CD4-positive, alpha-beta T cell (primary cell): ENCODE measurements at regions of chr12 and their contacts with region 1.

Region 1: DNA sequence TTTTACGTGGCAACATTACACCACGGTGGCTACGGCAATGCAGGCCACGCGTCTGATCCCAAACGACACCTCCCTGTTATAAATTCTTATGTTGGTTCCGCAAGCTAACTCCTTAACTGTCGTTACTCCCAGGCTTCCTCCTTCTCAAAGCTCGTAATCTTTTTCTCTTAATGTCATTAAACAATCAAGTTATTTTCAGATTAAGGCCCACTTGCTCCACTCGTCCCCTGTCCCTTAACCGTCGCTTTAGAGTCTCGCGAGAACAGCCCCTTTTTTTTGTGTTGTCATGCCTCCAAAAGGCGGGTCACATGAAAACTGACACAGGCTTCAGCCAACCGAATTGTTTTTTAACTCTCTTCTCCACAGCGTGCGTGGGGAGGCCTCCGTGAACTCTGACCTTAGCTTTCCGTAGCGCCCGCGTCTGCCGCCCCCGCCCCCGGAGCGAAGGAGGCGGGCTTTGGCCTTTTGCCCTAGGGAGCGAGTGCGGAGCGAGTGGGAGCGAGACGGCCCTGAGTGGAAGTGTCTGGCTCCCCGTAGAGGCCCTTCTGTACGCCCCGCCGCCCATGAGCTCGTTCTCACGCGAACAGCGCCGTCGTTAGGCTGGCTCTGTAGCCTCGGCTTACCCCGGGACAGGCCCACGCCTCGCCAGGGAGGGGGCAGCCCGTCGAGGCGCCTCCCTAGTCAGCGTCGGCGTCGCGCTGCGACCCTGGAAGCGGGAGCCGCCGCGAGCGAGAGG is at the start of gene CAND1:
- DNase-seq: peak; percentile 90 to 99 (median 94)
- ATAC-seq: peak; percentile 77
- H3K4me3 ChIP-seq: peak within 1 kb of the TSS; percentile 91
- H3K4me3 Mint-ChIP-seq: peak within 1 kb of the TSS; percentile 94
- H3K27ac ChIP-seq: peak within 1 kb of the TSS; percentile 96 to 98
- H3K27ac Mint-ChIP-seq: peak within 1 kb of the TSS; percentile 97
- H3K4me1 ChIP-seq: peaks cover 24% of the 10 kb centered on the region
- H3K4me1 Mint-ChIP-seq: peaks cover 50% of the 10 kb centered on the region
- H3K27me3 ChIP-seq: no peaks in the 10 kb centered on the region
- H3K27me3 Mint-ChIP-seq: no peaks in the 10 kb centered on the region
- CTCF ChIP-seq: no peak
- total RNA-seq, gene CAND1: 118 to 124 TPM

Region 2: DNA sequence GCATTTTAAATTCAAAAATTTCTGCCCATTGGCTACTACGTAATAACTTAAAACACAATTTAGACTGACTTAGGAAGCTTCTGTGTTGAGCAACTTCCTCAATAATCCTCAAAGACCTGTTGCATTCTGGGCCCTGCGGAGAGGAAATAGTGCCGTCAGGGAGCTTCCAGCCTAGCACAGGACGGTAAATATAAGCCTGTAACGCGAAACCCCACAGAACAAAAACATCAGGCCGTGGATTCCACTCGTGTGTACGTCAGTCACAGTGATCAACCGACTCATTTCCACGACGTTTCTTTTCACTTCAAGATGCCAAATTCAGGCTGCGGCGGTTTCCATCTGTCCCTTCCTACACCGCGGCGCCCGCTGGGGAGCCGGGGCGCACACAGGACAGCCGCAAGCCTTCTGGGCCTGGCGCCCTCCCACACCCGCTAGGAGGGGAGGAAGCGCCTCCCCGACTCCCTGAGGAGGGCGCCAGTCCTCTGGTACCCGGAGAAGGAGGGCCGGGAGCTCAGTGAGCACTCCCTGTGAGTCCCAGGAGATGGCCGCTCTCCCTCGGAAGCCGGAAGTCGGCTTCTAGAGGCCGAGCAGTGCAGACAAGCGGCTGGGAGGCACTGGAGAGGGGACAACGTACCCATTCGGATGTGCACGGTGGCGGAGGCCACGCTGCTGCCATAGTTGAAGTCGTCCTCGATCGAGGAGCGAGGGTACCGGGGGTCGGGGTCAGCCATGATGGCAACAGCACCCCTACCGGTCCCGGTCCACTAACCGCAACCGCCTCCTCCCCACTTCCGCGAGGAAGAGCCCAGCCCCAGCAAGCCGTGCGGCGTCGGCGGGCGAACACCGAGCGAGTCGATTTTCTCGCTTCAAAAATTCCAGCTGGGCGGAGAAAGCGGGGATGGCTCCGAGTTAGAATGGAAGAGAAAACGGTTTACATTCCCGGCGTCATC is 1099.6 kb before region 1 on chr12 and contains the start of gene TMBIM4:
- CTCF ChIA-PET with region 1: no interaction called
- POLR2A ChIA-PET with region 1: interaction called, 17 read pairs
- intact Hi-C with region 1: no loop called
- DNase-seq: peak; percentile 64 to 94 (median 77)
- ATAC-seq: peak; percentile 81
- H3K4me3 ChIP-seq: peak within 1 kb of the TSS; percentile 88
- H3K4me3 Mint-ChIP-seq: peak within 1 kb of the TSS; percentile 93
- H3K27ac ChIP-seq: peak within 1 kb of the TSS; percentile 98
- H3K27ac Mint-ChIP-seq: peak within 1 kb of the TSS; percentile 93
- H3K4me1 ChIP-seq: peaks cover 17% of the 10 kb centered on the region
- H3K4me1 Mint-ChIP-seq: peaks cover 57% of the 10 kb centered on the region
- H3K27me3 ChIP-seq: no peaks in the 10 kb centered on the region
- H3K27me3 Mint-ChIP-seq: peaks cover 4% of the 10 kb centered on the region
- CTCF ChIP-seq: peak; percentile 57
- total RNA-seq, gene TMBIM4: 24.1 to 24.2 TPM

Region 3: GRCh38 chr12:66964629-66965028 is 304.4 kb before region 1 on chr12:
- CTCF ChIA-PET with region 1: no interaction called
- POLR2A ChIA-PET with region 1: no interaction called
- intact Hi-C with region 1: loop called in 1 of 2 experiments (anchors 1 kb)
- DNase-seq: peak in 11 of 14 experiments; percentile 1 to 90 (median 27)
- ATAC-seq: peak; percentile 96
- H3K4me3 ChIP-seq: no peak overlapping the region
- H3K4me3 Mint-ChIP-seq: peak overlapping the region; percentile 69
- H3K27ac ChIP-seq: peak overlapping the region in 1 of 2 donors; percentile 60
- H3K27ac Mint-ChIP-seq: peak overlapping the region; percentile 86
- H3K4me1 ChIP-seq: peaks cover 13% of the 10 kb centered on the region
- H3K4me1 Mint-ChIP-seq: peaks cover 44% of the 10 kb centered on the region
- H3K27me3 ChIP-seq: no peaks in the 10 kb centered on the region
- H3K27me3 Mint-ChIP-seq: no peaks in the 10 kb centered on the region
- CTCF ChIP-seq: no peak

Region 4: DNA sequence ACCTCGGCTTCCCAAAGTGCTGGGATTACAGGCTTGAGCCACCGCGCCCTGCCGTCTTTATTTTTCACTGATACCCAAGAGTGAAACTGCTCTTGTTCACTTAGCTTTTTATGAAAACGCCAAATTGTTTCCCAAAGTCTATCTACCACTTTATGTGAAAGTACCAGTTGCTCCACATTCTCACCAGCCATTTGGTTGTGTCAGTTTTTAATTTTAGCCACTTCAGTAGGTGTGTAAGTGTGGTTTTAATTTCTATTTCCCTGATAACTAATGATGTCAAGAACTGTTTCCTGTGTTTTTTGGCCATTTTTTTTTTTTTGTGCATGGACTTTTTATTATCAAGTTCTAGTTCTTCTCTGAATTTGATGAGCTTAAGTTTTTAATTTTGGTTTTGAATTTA is 17.2 kb after region 1 on chr12:
- CTCF ChIA-PET with region 1: interaction called, 4 read pairs
- POLR2A ChIA-PET with region 1: interaction called, 33 read pairs
- intact Hi-C with region 1: no loop called
- DNase-seq: peak in 1 of 14 experiments; percentile 5
- ATAC-seq: no peak
- H3K4me3 ChIP-seq: no peak overlapping the region
- H3K4me3 Mint-ChIP-seq: no peak overlapping the region
- H3K27ac ChIP-seq: no peak overlapping the region
- H3K27ac Mint-ChIP-seq: no peak overlapping the region
- H3K4me1 ChIP-seq: peaks cover 6% of the 10 kb centered on the region
- H3K4me1 Mint-ChIP-seq: peaks cover 84% of the 10 kb centered on the region
- H3K27me3 ChIP-seq: no peaks in the 10 kb centered on the region
- H3K27me3 Mint-ChIP-seq: no peaks in the 10 kb centered on the region
- CTCF ChIP-seq: no peak

Region 5: DNA sequence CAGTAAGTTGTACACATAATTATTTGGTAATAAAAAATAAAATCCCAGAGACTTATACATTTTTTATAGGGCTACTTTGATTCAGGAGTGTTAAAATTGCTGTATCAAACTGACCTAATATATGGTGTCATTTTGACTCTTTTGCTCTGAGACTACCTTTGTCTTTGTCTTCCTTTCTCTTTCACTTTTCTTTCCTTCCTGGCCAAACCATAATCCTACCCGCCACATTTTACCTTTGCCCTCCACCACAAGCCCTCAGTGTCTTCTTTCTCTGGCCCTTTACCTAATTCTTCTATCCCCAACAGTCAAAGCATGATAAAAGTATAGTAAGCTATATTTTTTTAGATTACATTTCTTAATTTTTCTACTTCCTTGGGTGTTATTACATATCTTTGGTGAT is 62.1 kb after region 1 on chr12:
- CTCF ChIA-PET with region 1: no interaction called
- POLR2A ChIA-PET with region 1: no interaction called
- intact Hi-C with region 1: no loop called
- DNase-seq: peak in 1 of 14 experiments; percentile 11
- ATAC-seq: no peak
- H3K4me3 ChIP-seq: no peak overlapping the region
- H3K4me3 Mint-ChIP-seq: no peak overlapping the region
- H3K27ac ChIP-seq: no peak overlapping the region
- H3K27ac Mint-ChIP-seq: no peak overlapping the region
- H3K4me1 ChIP-seq: no peaks in the 10 kb centered on the region
- H3K4me1 Mint-ChIP-seq: peaks cover 5% of the 10 kb centered on the region
- H3K27me3 ChIP-seq: no peaks in the 10 kb centered on the region
- H3K27me3 Mint-ChIP-seq: no peaks in the 10 kb centered on the region
- CTCF ChIP-seq: no peak

Region 6: GRCh38 chr12:67648521-67649260 is 379.6 kb after region 1 on chr12 and contains the start of gene DYRK2:
- CTCF ChIA-PET with region 1: no interaction called
- POLR2A ChIA-PET with region 1: interaction called, 15 read pairs
- intact Hi-C with region 1: loop called (anchors 2 to 5 kb)
- DNase-seq: peak; percentile 60 to 93 (median 79)
- ATAC-seq: peak; percentile 54
- H3K4me3 ChIP-seq: peak within 1 kb of the TSS; percentile 72
- H3K4me3 Mint-ChIP-seq: peak within 1 kb of the TSS; percentile 94
- H3K27ac ChIP-seq: peak within 1 kb of the TSS; percentile 71 to 85
- H3K27ac Mint-ChIP-seq: peak within 1 kb of the TSS; percentile 94
- H3K4me1 ChIP-seq: peaks cover 31% of the 10 kb centered on the region
- H3K4me1 Mint-ChIP-seq: peaks cover 40% of the 10 kb centered on the region
- H3K27me3 ChIP-seq: no peaks in the 10 kb centered on the region
- H3K27me3 Mint-ChIP-seq: no peaks in the 10 kb centered on the region
- CTCF ChIP-seq: no peak
- total RNA-seq, gene DYRK2: 123 to 135 TPM